ENCODE measurements at regions of chr9 and their contacts with region 1.

Region 1: DNA sequence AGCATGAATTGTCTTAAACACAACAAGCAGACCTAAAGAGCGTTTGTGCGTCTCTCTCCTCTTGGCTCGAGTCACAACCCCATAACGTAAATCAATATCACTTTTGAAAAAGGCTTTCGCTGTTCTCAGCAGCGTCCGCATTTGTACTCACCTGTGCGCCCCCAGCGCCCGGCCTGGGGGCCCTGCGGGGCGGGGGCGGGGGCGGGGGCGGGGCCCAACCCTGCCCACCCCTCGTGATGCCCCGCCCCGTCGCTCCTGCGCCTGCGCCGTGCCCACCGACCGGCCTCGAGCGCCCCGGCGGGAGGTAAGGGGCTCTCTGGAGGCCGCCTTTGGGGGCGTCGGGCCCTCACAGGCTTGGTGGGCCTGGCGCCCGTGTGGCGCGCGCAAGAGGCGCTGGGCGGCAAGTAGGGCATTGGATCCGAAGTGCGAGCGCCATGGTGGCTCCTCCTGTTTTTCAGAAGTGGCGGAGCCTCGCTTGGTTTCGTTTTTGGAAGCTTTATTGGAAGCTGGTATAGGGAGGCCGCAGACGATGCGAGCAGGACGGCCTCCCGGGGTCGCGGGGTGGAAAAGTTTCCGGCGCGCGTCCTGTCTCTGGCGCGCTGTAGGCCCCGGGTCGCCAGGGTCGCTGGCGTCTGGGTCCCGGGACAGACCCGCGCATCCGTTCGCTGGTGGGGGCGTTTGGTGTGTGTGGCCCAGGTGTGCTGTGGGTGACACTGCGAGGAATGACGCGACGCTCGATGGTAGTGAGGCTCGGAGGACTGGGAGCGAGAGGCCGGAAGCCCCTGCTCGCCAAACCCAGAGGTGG is at the start of gene STX17:
- DNase-seq: peak; percentile 51 to 62 (median 60)
- H3K4me3 ChIP-seq: peak within 1 kb of the TSS; percentile 82 to 85 (median 83)
- H3K4me3 Mint-ChIP-seq: peak within 1 kb of the TSS; percentile 98 to 99
- H3K27ac ChIP-seq: peak within 1 kb of the TSS; percentile 72 to 95
- H3K27ac Mint-ChIP-seq: peak within 1 kb of the TSS; percentile 87 to 96 (median 93)
- H3K4me1 ChIP-seq: peaks cover 8 to 17% of the 10 kb centered on the region in 2 donors
- H3K4me1 Mint-ChIP-seq: peaks cover 21% of the 10 kb centered on the region
- H3K27me3 ChIP-seq: no peaks in the 10 kb centered on the region
- H3K27me3 Mint-ChIP-seq: peaks cover 1 to 7% (median 5%) of the 10 kb centered on the region in 3 donors
- CTCF ChIP-seq: no peak
- polyA plus RNA-seq, gene STX17: 10.3 to 16.8 (median 10.6) TPM

Region 2: GRCh38 chr9:99221621-99222415 is 684.8 kb before region 1 on chr9 and contains the starts of genes ALG2 and SEC61B:
- intact Hi-C with region 1: loop called in 1 of 2 experiments (anchors 5 kb)
- DNase-seq: peak; percentile 89 to 93 (median 92)
- H3K4me3 ChIP-seq: peak within 1 kb of the TSS; percentile 69 to 82 (median 80)
- H3K4me3 Mint-ChIP-seq: peak within 1 kb of the TSS; percentile 98 to 100
- H3K27ac ChIP-seq: peak within 1 kb of the TSS; percentile 83 to 96
- H3K27ac Mint-ChIP-seq: peak within 1 kb of the TSS; percentile 97 to 100 (median 100)
- H3K4me1 ChIP-seq: peaks cover 27 to 38% of the 10 kb centered on the region in 2 donors
- H3K4me1 Mint-ChIP-seq: peaks cover 42% of the 10 kb centered on the region
- H3K27me3 ChIP-seq: no peaks in the 10 kb centered on the region
- H3K27me3 Mint-ChIP-seq: peaks cover 0 to 2% (median 0%) of the 10 kb centered on the region in 3 donors
- CTCF ChIP-seq: no peak
- polyA plus RNA-seq, gene ALG2: 15.9 to 25.5 (median 23.6) TPM
- polyA plus RNA-seq, gene SEC61B: 117 to 443 (median 421) TPM